MCF 10A (cell line): ENCODE measurements at regions of chr6 and their contacts with region 1.

Region 1: DNA sequence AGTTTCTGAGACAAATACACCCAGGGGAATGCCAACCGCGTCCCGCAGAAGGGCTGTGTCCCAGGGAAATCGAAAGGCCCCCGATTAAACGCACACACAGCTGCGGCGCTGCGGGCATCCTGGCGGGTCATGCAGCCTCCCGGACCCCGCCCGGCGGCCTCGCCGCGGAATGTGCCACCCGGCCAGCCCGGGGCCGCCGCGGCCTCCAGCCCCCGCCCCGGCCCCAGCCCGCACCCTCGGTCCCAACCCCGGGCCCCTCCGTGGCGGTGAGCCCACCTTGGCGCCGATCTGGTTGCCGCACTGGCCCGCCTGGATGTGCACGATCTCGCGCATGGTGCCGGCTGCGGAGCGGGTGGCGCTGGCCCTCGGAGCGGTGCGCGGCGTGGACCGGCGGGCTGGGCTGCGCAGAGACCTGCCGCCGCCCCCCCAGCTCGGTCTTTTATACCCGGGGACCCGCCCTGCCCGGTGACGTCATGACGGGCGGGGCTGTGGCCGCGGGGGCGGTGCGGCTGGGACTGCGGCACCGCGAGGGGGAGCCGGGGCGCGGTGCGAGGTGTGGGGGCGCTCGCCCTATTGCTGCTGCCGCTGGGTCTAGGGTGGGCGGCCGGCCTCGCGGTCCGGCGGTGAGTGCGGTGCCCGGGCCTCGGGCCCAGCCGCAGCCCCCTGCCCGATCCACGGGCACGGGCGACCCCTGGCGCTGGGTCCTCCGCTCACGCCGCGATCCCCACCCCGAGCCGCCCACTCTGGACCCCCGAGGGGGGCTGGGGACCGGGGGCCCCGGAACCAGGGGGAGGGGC is at the start of gene TUBB2A:
- DNase-seq: peak; percentile 71
- H3K4me3 Mint-ChIP-seq: peak within 1 kb of the TSS; percentile 72
- H3K27ac Mint-ChIP-seq: peak within 1 kb of the TSS; percentile 69
- H3K4me1 Mint-ChIP-seq: no peaks in the 10 kb centered on the region
- H3K27me3 Mint-ChIP-seq: no peaks in the 10 kb centered on the region
- CTCF ChIP-seq: peak; percentile 78
- total RNA-seq, gene TUBB2A: 13.3 and 17.8 TPM in 2 replicates

Region 2: DNA sequence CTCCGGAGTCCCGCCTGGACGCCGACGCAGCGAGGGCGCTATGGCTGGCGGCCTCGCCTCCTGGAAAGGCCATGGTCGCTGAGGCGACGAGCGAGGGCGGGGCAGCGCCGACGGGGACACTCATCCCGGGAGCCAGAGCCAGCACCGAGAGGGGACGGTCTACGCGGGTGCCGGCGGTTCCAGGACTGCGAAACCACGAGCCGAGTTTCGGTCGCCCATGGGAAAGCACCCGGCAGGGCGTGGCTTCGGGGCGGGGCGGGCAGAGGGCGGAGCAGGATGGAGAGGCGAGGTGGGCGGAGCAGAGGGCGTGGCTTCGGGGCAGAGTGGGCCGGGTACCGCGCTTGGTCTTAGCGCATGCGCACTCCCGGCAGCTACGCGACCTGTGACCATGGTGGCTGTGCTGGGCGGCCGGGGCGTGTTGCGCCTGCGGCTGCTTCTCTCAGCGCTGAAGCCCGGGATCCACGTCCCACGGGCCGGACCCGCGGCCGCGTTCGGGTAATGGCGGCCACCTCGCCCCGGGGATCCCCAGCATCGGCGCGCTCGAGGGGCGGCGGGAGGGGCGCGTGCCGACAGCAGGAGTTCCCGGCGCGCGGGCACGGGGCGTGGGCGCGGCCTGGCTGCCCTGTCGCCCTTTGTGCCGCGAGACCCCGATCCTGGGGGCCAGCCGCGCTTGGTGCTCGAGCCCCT is 38.8 kb before region 1 on chr6 and contains the start of gene BPHL:
- CTCF ChIA-PET with region 1: interaction called, 4 read pairs
- POLR2A ChIA-PET with region 1: no interaction called
- intact Hi-C with region 1: loop called (anchors 5 kb)
- DNase-seq: peak; percentile 92
- H3K4me3 Mint-ChIP-seq: peak within 1 kb of the TSS; percentile 80
- H3K27ac Mint-ChIP-seq: peak within 1 kb of the TSS; percentile 98
- H3K4me1 Mint-ChIP-seq: peaks cover 14% of the 10 kb centered on the region
- H3K27me3 Mint-ChIP-seq: no peaks in the 10 kb centered on the region
- CTCF ChIP-seq: no peak
- total RNA-seq, gene BPHL: 13.2 and 17.5 TPM in 2 replicates

Region 3: GRCh38 chr6:3125815-3126214 is 31.5 kb before region 1 on chr6:
- CTCF ChIA-PET with region 1: interaction called, 6 read pairs
- POLR2A ChIA-PET with region 1: no interaction called
- intact Hi-C with region 1: loop called (anchors 1 kb)
- DNase-seq: no peak
- H3K4me3 Mint-ChIP-seq: no peak overlapping the region
- H3K27ac Mint-ChIP-seq: no peak overlapping the region
- H3K4me1 Mint-ChIP-seq: no peaks in the 10 kb centered on the region
- H3K27me3 Mint-ChIP-seq: no peaks in the 10 kb centered on the region
- CTCF ChIP-seq: no peak